Psoas muscle (tissue), 8 donors: ENCODE measurements at regions of chr2 and their contacts with region 1.

Region 1: GRCh38 chr2:69637923-69638322 is 5.6 kb downstream of the AAK1 start:
- DNase-seq: no peak
- ATAC-seq: no peak
- H3K4me3 ChIP-seq: no peak overlapping the region
- H3K27ac ChIP-seq: no peak overlapping the region
- H3K4me1 ChIP-seq: peaks cover 59% of the 10 kb centered on the region
- H3K27me3 ChIP-seq: no peaks in the 10 kb centered on the region
- CTCF ChIP-seq: no peak

Region 2: DNA sequence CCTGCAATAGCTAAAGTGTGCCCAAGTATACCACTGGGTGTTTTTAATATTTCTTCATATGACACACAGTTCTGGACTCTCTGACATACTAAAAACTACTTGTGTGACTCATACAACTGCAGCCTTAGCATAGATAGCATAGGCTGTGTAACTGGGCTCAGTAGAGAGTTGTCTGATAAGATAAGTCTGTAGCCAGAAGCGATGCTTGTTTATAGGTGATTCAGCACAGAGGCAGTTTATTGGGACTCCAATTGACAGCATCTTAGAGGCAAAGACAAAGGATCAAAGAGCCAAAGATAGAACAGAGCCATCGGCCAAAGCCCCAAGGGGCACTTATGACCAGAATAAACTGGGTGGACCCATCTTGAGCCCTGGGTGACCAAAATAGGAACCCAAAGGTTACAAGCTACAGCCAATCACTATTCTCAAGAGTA is 36.7 kb before region 1 on chr2:
- intact Hi-C with region 1: loop called (anchors 2 to 5 kb)
- DNase-seq: no peak
- ATAC-seq: peak; percentile 81 to 94 (median 90)
- H3K4me3 ChIP-seq: no peak overlapping the region
- H3K27ac ChIP-seq: peak overlapping the region; percentile 67
- H3K4me1 ChIP-seq: peaks cover 44% of the 10 kb centered on the region
- H3K27me3 ChIP-seq: no peaks in the 10 kb centered on the region
- CTCF ChIP-seq: no peak